Ascending aorta (tissue), 2 donors: ENCODE measurements at regions of chr10 and their contacts with region 1.

Region 1: GRCh38 chr10:71860243-71861029 is 9.4 kb upstream of the PSAP start:
- DNase-seq: peak; percentile 97 to 99
- H3K4me3 ChIP-seq: no peak overlapping the region
- H3K27ac ChIP-seq: peak overlapping the region; percentile 94 to 99
- H3K4me1 ChIP-seq: peaks cover 10 to 21% of the 10 kb centered on the region in 2 donors
- H3K27me3 ChIP-seq: no peaks in the 10 kb centered on the region
- CTCF ChIP-seq: no peak

Region 2: DNA sequence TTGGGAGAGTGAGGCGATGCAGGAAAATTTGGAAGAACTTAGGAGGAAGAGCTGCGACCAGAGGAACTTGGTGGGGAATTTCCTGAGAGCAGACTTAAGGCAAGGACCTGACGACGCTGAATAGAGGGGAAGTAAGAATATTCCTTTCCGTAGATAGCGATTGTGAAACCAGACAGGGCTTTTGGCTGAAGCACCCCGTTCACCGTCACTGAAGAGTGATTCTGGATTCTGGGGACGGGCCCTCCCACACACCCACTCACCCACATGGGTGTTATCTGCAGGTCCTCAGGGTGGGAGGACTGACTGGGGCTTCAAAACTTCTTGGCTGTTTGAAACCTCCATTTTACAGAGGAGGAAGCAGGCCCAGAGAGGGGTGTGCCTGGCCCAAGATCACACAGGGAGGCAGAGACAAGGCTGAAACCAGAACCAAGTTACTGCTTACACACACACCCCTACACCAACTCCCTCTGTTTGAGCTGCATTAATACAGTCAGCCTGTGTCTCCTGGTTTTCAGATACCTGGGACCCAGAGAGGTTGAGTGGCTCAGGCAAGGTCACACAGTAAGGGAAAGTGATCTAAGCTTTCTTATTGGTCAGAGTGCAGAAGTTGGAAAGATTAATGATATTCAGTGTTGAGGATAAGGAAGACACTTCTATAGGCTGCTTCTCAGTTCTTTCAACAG is 500.9 kb before region 1 on chr10:
- intact Hi-C with region 1: no loop called
- DNase-seq: no peak
- H3K4me3 ChIP-seq: no peak overlapping the region
- H3K27ac ChIP-seq: peak overlapping the region in 1 of 2 donors; percentile 27
- H3K4me1 ChIP-seq: no peaks in the 10 kb centered on the region
- H3K27me3 ChIP-seq: no peaks in the 10 kb centered on the region
- CTCF ChIP-seq: no peak

Region 3: DNA sequence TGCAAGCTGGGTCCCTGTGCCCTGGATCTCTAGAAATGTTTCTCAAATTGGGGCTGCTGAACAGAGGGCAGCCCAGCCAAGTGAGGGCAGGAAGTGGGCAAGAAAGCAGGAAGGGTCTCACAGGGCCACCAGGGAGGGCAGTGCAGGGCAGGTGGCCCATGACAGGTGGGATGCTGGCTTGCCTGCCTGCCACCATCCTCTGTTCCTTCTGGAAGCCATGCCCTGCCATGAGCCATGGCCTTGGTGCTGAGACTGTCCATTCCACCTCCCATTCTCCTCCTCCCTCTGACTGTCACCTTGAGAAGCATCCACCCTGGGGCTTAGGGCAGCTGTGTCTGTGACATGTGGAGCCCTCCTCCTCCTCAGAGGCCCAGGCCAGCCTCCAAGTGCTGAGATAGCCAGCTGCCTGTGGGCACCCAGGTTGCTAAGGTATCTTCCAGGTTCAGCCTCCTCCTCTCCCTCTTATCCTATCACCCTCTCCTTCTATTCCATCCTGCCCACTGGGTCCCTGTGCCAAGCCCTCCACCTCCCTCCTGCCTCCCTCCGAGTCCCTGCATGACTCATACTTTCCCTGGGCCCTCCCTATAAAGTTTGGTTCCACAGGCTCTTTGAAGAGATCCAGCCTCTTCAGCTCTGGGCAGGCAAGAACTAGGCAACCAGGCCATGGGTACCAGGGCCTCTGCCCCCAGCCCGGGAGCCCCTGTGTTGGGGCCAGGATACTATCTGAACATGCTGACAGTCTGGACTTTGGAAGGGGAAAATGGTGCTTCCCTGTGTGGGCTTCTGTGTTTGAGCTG is 88.4 kb before region 1 on chr10:
- intact Hi-C with region 1: loop called (anchors 2 kb)
- DNase-seq: peak; percentile 64 to 93
- H3K4me3 ChIP-seq: peak overlapping the region; percentile 69 to 85
- H3K27ac ChIP-seq: peak overlapping the region; percentile 94 to 98
- H3K4me1 ChIP-seq: peaks cover 40 to 54% of the 10 kb centered on the region in 2 donors
- H3K27me3 ChIP-seq: no peaks in the 10 kb centered on the region
- CTCF ChIP-seq: no peak

Region 4: DNA sequence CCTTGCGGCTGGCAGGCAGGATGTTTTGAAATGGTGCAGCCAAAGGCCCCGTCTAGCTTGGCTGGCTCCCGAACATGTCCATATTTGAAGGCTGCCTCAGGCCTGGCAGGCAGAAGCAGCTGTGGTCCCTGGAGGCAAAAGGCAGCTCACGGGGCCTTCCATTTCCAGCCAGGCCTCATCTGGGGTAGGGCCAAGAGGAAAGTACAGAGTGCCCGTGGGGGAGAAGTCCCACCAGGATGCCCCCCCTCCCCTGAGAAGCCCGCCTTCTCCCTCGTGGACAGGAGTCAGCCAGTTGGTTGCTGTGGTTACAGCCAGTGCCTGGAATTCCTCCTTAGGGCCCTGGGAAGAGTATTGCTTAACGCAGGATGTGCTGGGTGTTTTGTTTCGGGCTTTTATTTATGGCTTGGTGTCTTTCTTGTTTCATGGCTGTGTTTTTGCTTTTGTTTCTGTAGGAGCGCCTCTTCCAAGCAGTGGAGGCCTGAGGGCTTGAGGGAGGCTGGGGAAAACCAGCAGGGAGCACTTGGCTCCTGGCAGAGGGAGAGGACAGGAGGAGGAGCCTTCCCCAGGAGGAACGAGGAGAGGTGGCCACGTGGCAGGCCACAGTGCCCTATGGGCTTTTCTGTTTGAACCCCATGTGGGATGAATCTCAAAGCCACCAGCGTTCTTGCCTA is 149.1 kb after region 1 on chr10:
- intact Hi-C with region 1: no loop called
- DNase-seq: peak; percentile 93 to 99
- H3K4me3 ChIP-seq: peak overlapping the region in 1 of 2 donors; percentile 16
- H3K27ac ChIP-seq: peak overlapping the region; percentile 93 to 94
- H3K4me1 ChIP-seq: peaks cover 21 to 27% of the 10 kb centered on the region in 2 donors
- H3K27me3 ChIP-seq: no peaks in the 10 kb centered on the region
- CTCF ChIP-seq: no peak